Activated CD4-positive, alpha-beta T cell treated with anti-CD3 and anti-CD28 coated beads, Interleukin-2, amount 10 ng/mL, durations not matched to agents 24 days and 14 days (primary cell): ENCODE measurements at regions of chr3 and their contacts with region 1.

Region 1: GRCh38 chr3:15743587-15744009 is 54.2 kb downstream of the ANKRD28 start:
- DNase-seq: no peak
- H3K4me3 Mint-ChIP-seq: no peak overlapping the region
- H3K27ac Mint-ChIP-seq: no peak overlapping the region
- H3K4me1 Mint-ChIP-seq: peaks cover 45% of the 10 kb centered on the region
- H3K27me3 Mint-ChIP-seq: no peaks in the 10 kb centered on the region

Region 2: DNA sequence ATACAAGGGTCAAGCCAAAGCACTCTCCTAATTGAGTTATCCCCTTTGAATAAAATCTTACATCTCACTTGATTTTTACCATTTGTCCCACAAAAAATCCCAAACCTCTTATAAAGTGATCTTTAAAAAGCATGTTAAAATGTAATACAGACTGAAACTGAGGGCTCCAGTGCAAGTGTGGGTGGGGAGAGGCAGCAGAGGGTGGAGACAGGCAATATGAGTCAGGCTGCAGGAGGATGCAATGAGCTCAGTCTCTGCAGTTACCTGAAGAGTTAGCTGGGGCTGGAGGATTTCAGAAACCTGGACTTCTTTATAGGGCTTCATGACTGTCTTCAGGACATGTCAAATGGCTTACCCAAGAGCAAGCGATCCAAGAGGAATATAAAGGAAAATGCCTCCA is 207.9 kb before region 1 on chr3:
- intact Hi-C with region 1: loop called (anchors 10 kb)
- DNase-seq: peak; percentile 86
- H3K4me3 Mint-ChIP-seq: peak overlapping the region; percentile 76
- H3K27ac Mint-ChIP-seq: peak overlapping the region; percentile 91
- H3K4me1 Mint-ChIP-seq: peaks cover 54% of the 10 kb centered on the region
- H3K27me3 Mint-ChIP-seq: no peaks in the 10 kb centered on the region

Region 3: GRCh38 chr3:15647611-15648167 is 95.9 kb before region 1 on chr3:
- intact Hi-C with region 1: loop called (anchors 1 kb)
- DNase-seq: peak; percentile 92
- H3K4me3 Mint-ChIP-seq: peak overlapping the region; percentile 69
- H3K27ac Mint-ChIP-seq: peak overlapping the region; percentile 38
- H3K4me1 Mint-ChIP-seq: peaks cover 38% of the 10 kb centered on the region
- H3K27me3 Mint-ChIP-seq: peaks cover 21% of the 10 kb centered on the region

Region 4: GRCh38 chr3:15768421-15769255 is 25.0 kb after region 1 on chr3:
- intact Hi-C with region 1: loop called (anchors 1 kb)
- DNase-seq: no peak
- H3K4me3 Mint-ChIP-seq: peak overlapping the region; percentile 24
- H3K27ac Mint-ChIP-seq: peak overlapping the region; percentile 66
- H3K4me1 Mint-ChIP-seq: peaks cover 27% of the 10 kb centered on the region
- H3K27me3 Mint-ChIP-seq: no peaks in the 10 kb centered on the region